Endothelial cell of umbilical vein (primary cell): ENCODE measurements at regions of chr13 and their contacts with region 1.

Region 1: DNA sequence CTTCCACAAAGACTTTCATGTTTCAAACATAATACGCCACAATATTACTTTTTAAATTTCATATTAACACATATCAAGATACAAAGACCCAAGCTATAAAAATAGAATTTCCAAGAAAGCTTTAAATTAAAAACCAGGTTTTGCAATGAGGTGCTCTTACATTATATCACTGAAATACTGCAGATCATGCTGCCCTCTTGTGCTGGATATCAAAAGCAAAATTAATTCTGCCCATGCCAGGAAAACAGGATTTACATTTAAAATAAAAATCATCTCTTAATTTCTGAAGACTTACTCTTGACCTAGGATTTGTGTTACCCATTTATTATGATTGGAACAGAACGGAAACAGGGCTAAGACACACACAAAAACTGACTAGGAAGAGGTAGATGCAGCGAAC is 145.0 kb downstream of the ABCC4 start:
- DNase-seq: peak; percentile 50
- H3K4me3 ChIP-seq: no peak overlapping the region
- H3K27ac ChIP-seq: no peak overlapping the region
- H3K4me1 ChIP-seq: peaks cover 22% of the 10 kb centered on the region
- H3K27me3 ChIP-seq: no peaks in the 10 kb centered on the region
- CTCF ChIP-seq: peak; percentile 18 to 27
- POLR2A ChIP-seq: no peak

Region 2: DNA sequence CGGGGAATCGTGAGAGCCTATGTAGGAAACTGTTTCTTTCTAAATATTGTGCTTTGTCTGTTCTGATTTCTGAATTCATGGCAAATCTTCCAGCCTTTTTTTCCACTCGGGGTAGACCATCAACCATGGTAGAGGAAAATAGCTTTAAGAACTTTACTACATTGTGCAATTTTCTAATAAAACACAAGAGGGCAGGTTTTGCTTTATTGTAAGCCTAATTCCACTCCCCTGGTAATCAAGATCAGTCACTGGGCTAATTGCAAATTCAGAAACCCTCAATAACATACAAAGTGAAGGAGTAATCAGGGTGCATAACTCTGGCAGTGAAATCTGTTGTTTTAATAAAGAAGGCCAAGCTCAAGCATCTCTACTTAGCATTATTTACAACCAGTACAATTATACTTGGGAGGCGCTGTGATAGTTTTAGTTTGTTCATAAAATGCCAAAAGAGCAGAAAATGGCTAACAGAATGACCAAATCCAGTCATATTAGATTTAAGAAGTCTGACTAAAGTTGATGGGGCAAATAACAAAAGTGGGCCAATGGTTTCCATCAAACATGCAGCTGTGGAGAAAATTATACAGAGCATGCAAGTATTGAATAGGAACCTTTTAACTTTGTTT is 720.5 kb before region 1 on chr13:
- CTCF ChIA-PET with region 1: interaction called, 19 read pairs
- POLR2A ChIA-PET with region 1: no interaction called
- dilution Hi-C with region 1: no loop called
- intact Hi-C with region 1: loop called (anchors 10 kb)
- DNase-seq: peak; percentile 43
- H3K4me3 ChIP-seq: no peak overlapping the region
- H3K27ac ChIP-seq: no peak overlapping the region
- H3K4me1 ChIP-seq: no peaks in the 10 kb centered on the region
- H3K27me3 ChIP-seq: peaks cover 15 to 18% of the 10 kb centered on the region in 2 experiments
- CTCF ChIP-seq: peak; percentile 27 to 35
- POLR2A ChIP-seq: no peak

Region 3: GRCh38 chr13:94674609-94675348 is 481.4 kb before region 1 on chr13:
- CTCF ChIA-PET with region 1: interaction called, 95 read pairs
- POLR2A ChIA-PET with region 1: no interaction called
- dilution Hi-C with region 1: no loop called
- intact Hi-C with region 1: loop called (anchors 1 kb)
- DNase-seq: peak; percentile 49
- H3K4me3 ChIP-seq: no peak overlapping the region
- H3K27ac ChIP-seq: no peak overlapping the region
- H3K4me1 ChIP-seq: no peaks in the 10 kb centered on the region
- H3K27me3 ChIP-seq: peaks cover 6 to 26% of the 10 kb centered on the region in 2 experiments
- CTCF ChIP-seq: peak; percentile 60 to 78
- POLR2A ChIP-seq: no peak

Region 4: GRCh38 chr13:94860981-94861407 is 295.2 kb before region 1 on chr13:
- CTCF ChIA-PET with region 1: interaction called, 4 read pairs
- POLR2A ChIA-PET with region 1: no interaction called
- dilution Hi-C with region 1: no loop called
- intact Hi-C with region 1: loop called (anchors 2 kb)
- DNase-seq: peak; percentile 80
- H3K4me3 ChIP-seq: peak overlapping the region in 2 of 3 experiments; percentile 37 to 77
- H3K27ac ChIP-seq: peak overlapping the region; percentile 91
- H3K4me1 ChIP-seq: peaks cover 43% of the 10 kb centered on the region
- H3K27me3 ChIP-seq: peaks cover 15 to 17% of the 10 kb centered on the region in 2 experiments
- CTCF ChIP-seq: no peak
- POLR2A ChIP-seq: no peak

Region 5: DNA sequence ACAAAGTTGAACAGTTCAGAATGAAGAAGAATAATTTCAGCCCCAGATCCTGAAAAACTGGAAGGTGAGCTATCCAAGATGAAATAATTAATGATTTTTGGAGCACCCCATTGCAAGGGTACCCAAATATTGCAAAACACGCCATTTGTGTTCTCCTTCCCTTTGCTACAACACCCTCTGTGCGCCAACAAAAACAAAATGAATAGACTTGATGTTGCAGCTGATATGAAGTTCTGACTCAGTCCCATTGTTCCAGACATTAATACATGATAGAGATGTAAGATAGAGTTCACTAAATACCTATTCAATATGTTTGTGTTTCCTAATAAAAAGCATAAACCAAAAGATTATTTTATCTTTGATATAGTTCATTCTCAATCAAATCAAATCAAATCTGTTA is 156.3 kb before region 1 on chr13:
- CTCF ChIA-PET with region 1: interaction called, 4 read pairs
- POLR2A ChIA-PET with region 1: no interaction called
- dilution Hi-C with region 1: no loop called
- intact Hi-C with region 1: loop called (anchors 2 kb)
- DNase-seq: peak; percentile 62
- H3K4me3 ChIP-seq: no peak overlapping the region
- H3K27ac ChIP-seq: no peak overlapping the region
- H3K4me1 ChIP-seq: peaks cover 11% of the 10 kb centered on the region
- H3K27me3 ChIP-seq: peaks cover 6 to 10% of the 10 kb centered on the region in 2 experiments
- CTCF ChIP-seq: no peak
- POLR2A ChIP-seq: no peak

Region 6: DNA sequence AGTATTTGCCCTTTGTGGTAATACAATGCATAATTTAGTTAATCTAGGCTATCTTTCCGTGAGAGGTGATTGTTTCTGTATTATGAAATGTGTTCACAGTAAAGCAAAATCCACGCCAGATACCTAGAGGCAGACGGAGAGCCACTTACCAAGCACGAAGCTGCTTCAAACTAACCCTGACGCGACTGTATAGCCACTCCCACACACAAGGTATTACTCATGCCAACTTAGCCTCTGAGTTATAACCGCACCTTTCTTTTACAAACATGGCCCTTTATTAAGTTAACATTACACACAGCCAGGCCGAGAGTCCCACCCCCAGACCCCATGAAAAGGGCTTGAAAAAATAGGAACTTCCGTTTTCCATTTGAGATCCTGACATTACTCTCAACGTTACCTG is 40.7 kb before region 1 on chr13:
- CTCF ChIA-PET with region 1: interaction called, 3 read pairs
- POLR2A ChIA-PET with region 1: no interaction called
- dilution Hi-C with region 1: no loop called
- intact Hi-C with region 1: loop called (anchors 1 kb)
- DNase-seq: no peak
- H3K4me3 ChIP-seq: peak overlapping the region in 1 of 3 experiments; percentile 13
- H3K27ac ChIP-seq: peak overlapping the region; percentile 65
- H3K4me1 ChIP-seq: peaks cover 43% of the 10 kb centered on the region
- H3K27me3 ChIP-seq: no peaks in the 10 kb centered on the region
- CTCF ChIP-seq: no peak
- POLR2A ChIP-seq: no peak

Region 7: DNA sequence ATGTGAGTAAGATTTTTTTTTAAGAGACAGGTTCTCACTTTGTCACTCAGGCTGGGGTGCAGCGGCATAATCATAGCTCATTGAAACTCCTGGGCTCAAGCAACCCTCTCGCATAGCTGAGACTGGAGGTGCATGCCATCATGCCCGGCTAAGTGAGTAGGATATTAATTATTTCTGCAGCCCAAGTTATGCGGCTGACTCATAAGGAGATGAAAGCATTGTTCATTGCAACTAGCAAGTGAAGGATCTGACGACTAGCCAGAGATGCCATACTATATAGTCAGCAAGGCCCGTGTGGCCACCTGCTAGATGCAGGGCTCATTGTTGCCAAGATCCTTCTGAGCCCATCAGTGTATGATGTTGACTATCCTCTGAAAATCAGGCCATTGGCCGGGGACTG is 99.9 kb after region 1 on chr13:
- CTCF ChIA-PET with region 1: no interaction called
- POLR2A ChIA-PET with region 1: no interaction called
- dilution Hi-C with region 1: no loop called
- intact Hi-C with region 1: no loop called
- DNase-seq: peak; percentile 85
- H3K4me3 ChIP-seq: no peak overlapping the region
- H3K27ac ChIP-seq: peak overlapping the region; percentile 47
- H3K4me1 ChIP-seq: peaks cover 36% of the 10 kb centered on the region
- H3K27me3 ChIP-seq: no peaks in the 10 kb centered on the region
- CTCF ChIP-seq: no peak
- POLR2A ChIP-seq: no peak

Region 8: DNA sequence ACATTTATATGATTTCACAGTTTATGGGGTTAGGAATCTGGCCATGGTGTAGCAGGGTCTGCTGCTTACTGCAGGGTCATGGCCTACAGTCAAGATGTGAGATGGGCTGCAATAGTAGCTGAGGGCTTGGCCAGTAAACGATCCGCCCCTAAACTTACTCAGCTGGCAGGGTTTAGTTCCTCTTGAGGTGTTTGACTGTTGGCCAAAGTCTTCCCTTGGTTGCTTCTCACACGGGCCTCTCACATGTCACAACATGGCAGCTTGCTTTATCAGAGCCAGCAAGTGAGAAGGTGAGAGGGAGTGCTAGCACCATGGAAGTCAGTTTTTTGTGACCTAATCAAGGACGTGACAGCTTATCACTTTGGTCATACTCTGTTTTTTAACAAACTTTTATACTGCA is 597.9 kb after region 1 on chr13:
- CTCF ChIA-PET with region 1: no interaction called
- POLR2A ChIA-PET with region 1: no interaction called
- dilution Hi-C with region 1: no loop called
- intact Hi-C with region 1: no loop called
- DNase-seq: no peak
- H3K4me3 ChIP-seq: no peak overlapping the region
- H3K27ac ChIP-seq: no peak overlapping the region
- H3K4me1 ChIP-seq: no peaks in the 10 kb centered on the region
- H3K27me3 ChIP-seq: no peaks in the 10 kb centered on the region
- CTCF ChIP-seq: no peak
- POLR2A ChIP-seq: no peak